Activated naive CD8-positive, alpha-beta T cell treated with anti-CD3 and anti-CD28 coated beads, Interleukin-2, amount 10 ng/mL, durations not matched to agents 7 days and 5 days (primary cell): ENCODE measurements at regions of chr21 and their contacts with region 1.

Region 1: DNA sequence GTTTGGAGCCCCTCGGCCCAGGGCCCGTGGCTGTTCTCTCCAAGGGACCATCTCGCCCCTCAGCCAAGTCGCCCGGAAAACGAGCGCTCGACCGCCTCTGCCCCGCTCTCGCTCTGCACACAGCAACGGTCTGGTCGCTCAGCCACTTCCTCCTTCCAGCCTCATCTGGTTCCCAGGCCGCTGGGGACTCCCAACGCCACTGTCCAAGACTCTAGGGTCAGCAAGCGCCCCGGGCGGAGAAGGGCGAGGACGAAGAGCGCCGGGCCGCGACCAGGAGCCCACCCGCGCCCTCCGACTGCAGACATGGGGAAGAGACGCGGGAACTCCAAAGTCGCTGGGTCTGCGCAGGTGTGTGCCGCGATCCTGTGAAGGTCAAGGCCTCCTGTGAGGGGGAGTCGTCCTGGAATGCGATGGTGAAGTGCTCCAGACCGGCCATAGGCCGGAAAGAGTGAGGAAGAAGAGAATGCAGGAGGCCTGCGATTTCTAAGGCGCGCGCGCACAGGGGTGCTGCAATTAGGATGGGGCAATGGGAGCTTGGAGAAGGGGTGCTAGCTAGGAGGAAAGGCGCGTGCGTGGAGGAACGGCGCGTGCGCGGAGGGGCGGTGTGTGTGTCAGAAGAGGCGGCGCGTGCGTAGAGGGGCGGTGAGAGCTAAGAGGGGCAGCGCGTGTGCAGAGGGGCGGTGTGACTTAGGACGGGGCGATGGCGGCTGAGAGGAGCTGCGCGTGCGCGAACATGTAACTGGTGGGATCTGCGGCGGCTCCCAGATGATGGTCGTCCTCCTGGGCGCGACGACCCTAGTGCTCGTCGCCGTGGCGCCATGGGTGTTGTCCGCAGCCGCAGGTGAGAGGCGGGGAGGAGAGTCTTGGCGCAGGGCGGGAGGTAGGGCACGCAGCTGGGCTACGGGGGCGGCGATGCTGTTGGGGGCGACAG is at the start of gene IFNAR1:
- DNase-seq: peak; percentile 98
- ATAC-seq: peak; percentile 97
- H3K4me3 Mint-ChIP-seq: no peak within 1 kb of the TSS
- H3K27ac Mint-ChIP-seq: no peak within 1 kb of the TSS
- H3K4me1 Mint-ChIP-seq: peaks cover 19% of the 10 kb centered on the region
- H3K27me3 Mint-ChIP-seq: peaks cover 7% of the 10 kb centered on the region
- total RNA-seq, gene IFNAR1: 35.7 to 36.3 TPM

Region 2: GRCh38 chr21:33266050-33266788 is 58.3 kb before region 1 on chr21 and contains the start of gene IL10RB:
- POLR2A ChIA-PET with region 1: interaction called, 15 read pairs
- DNase-seq: peak; percentile 88
- ATAC-seq: peak; percentile 77
- H3K4me3 Mint-ChIP-seq: peak within 1 kb of the TSS; percentile 97
- H3K27ac Mint-ChIP-seq: peak within 1 kb of the TSS; percentile 88
- H3K4me1 Mint-ChIP-seq: peaks cover 44% of the 10 kb centered on the region
- H3K27me3 Mint-ChIP-seq: no peaks in the 10 kb centered on the region
- total RNA-seq, gene IL10RB: 40.6 to 44.1 TPM

Region 3: DNA sequence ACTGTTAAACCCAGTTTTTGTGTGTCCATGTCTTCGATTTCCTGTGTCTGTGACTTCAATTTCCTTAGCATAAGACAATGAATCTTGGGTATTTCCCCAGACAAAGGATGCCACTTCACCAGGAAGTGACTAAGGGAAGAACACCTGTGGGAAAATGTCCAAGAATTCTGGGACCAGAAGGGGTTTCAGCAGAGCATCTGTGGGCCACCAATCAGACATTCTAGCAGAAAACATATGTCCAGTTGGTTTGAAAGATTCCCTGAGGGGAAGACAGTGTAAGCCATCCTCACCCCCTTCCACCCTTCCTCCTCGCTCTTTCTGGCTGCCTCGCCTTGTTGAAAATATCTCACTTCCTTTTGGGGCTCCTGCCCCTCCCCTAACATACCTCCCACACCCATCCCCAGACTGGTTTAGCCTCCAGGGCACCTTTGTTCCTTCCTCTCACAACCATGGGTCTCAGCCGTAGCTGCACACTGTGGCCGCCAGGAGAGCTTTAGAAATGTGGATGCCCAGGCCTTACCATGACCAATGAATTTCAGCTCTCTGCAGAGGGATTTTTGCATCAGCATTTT is 25.3 kb before region 1 on chr21:
- POLR2A ChIA-PET with region 1: interaction called, 10 read pairs
- DNase-seq: no peak
- ATAC-seq: peak; percentile 91
- H3K4me3 Mint-ChIP-seq: peak overlapping the region; percentile 26
- H3K27ac Mint-ChIP-seq: peak overlapping the region; percentile 60
- H3K4me1 Mint-ChIP-seq: peaks cover 30% of the 10 kb centered on the region
- H3K27me3 Mint-ChIP-seq: no peaks in the 10 kb centered on the region

Region 4: GRCh38 chr21:33339918-33340317 is 15.4 kb after region 1 on chr21:
- POLR2A ChIA-PET with region 1: no interaction called
- DNase-seq: no peak
- ATAC-seq: no peak
- H3K4me3 Mint-ChIP-seq: no peak overlapping the region
- H3K27ac Mint-ChIP-seq: no peak overlapping the region
- H3K4me1 Mint-ChIP-seq: peaks cover 1% of the 10 kb centered on the region
- H3K27me3 Mint-ChIP-seq: no peaks in the 10 kb centered on the region